ENCODE measurements at regions of chr12 and their contacts with region 1.

Region 1: GRCh38 chr12:106223485-106224354 is 24.1 kb downstream of the CKAP4 start:
- DNase-seq: peak; percentile 46 to 74 (median 69)
- H3K4me3 ChIP-seq: no peak overlapping the region
- H3K27ac ChIP-seq: no peak overlapping the region
- H3K4me1 ChIP-seq: peaks cover 0 to 5% (median 0%) of the 10 kb centered on the region in 4 experiments
- H3K27me3 ChIP-seq: peaks cover 0 to 4% (median 2%) of the 10 kb centered on the region in 5 experiments

Region 2: GRCh38 chr12:105843986-105844760 is 379.5 kb before region 1 on chr12:
- CTCF ChIA-PET with region 1: no interaction called
- POLR2A ChIA-PET with region 1: no interaction called
- DNase-seq: no peak
- H3K4me3 ChIP-seq: no peak overlapping the region
- H3K27ac ChIP-seq: no peak overlapping the region
- H3K4me1 ChIP-seq: no peaks in the 10 kb centered on the region
- H3K27me3 ChIP-seq: peaks cover 0 to 7% (median 2%) of the 10 kb centered on the region in 5 experiments

Region 3: DNA sequence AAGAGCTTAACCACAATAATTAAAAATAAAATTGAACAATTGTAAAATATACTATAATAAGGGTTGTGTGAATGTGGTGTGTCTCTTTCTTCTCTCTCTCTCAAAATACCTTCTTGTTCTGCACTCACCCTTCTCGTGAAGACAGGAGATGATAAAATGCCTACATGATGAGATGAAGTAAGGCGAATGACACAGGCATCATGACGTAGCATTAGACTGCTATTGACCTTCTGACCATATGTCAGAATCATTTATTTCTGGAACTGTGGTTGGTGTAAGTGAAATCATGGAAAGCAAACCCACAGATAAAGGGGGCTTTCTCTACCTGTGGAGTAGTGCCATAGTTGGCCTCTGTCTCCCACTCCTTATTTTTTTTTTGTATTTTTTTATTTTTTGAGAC is 47.2 kb before region 1 on chr12:
- CTCF ChIA-PET with region 1: no interaction called
- POLR2A ChIA-PET with region 1: no interaction called
- DNase-seq: no peak
- H3K4me3 ChIP-seq: no peak overlapping the region
- H3K27ac ChIP-seq: no peak overlapping the region
- H3K4me1 ChIP-seq: no peaks in the 10 kb centered on the region
- H3K27me3 ChIP-seq: peaks cover 0 to 11% (median 2%) of the 10 kb centered on the region in 5 experiments

Region 4: DNA sequence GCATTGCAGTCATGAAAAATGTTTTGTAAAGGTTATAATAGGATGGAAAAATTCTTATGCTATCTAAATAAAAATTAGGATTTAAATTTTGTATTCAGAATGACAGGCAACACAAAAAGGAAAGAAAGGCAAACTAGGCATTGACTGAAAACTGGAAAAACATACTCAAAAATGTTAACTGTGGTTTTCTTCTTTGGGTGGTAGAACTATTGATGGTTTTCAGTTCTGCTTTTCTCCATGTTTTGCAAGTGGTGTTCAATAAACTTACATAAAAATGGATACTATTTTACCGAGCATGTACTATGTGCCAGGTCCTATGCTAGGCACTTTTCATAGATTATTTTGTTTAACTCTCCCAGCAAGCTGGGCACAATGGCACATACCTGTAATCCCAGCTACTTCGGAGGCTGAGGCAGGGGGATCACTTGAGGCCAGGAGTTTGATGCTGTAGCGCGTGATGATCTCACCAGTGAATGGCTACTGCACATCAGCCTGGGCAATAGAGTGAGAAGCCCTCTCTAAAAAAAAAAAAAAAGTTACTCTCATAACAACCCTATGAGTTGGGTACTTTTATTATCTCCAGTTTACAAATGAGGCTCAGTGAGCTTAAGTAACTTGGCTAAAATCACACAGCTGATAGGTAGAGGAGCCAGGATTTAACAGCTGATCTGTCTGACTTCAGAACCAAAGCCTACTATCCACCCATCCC is 52.5 kb after region 1 on chr12:
- CTCF ChIA-PET with region 1: interaction called, 13 read pairs
- POLR2A ChIA-PET with region 1: interaction called, 3 read pairs
- DNase-seq: no peak
- H3K4me3 ChIP-seq: no peak overlapping the region
- H3K27ac ChIP-seq: no peak overlapping the region
- H3K4me1 ChIP-seq: peaks cover 0 to 3% (median 0%) of the 10 kb centered on the region in 4 experiments
- H3K27me3 ChIP-seq: no peaks in the 10 kb centered on the region

Region 5: GRCh38 chr12:106282457-106283097 is 58.9 kb after region 1 on chr12:
- CTCF ChIA-PET with region 1: interaction called, 43 read pairs
- POLR2A ChIA-PET with region 1: interaction called, 3 read pairs
- DNase-seq: peak; percentile 58 to 77 (median 73)
- H3K4me3 ChIP-seq: no peak overlapping the region
- H3K27ac ChIP-seq: no peak overlapping the region
- H3K4me1 ChIP-seq: peaks cover 0 to 7% (median 1%) of the 10 kb centered on the region in 4 experiments
- H3K27me3 ChIP-seq: peaks cover 0 to 2% (median 0%) of the 10 kb centered on the region in 5 experiments

Region 6: GRCh38 chr12:106309671-106310505 is 86.2 kb after region 1 on chr12:
- CTCF ChIA-PET with region 1: interaction called, 10 read pairs
- POLR2A ChIA-PET with region 1: interaction called, 6 read pairs
- DNase-seq: peak in 2 of 3 donors; percentile 45 to 69
- H3K4me3 ChIP-seq: no peak overlapping the region
- H3K27ac ChIP-seq: no peak overlapping the region
- H3K4me1 ChIP-seq: peaks cover 21 to 44% (median 33%) of the 10 kb centered on the region in 4 experiments
- H3K27me3 ChIP-seq: no peaks in the 10 kb centered on the region

Region 7: DNA sequence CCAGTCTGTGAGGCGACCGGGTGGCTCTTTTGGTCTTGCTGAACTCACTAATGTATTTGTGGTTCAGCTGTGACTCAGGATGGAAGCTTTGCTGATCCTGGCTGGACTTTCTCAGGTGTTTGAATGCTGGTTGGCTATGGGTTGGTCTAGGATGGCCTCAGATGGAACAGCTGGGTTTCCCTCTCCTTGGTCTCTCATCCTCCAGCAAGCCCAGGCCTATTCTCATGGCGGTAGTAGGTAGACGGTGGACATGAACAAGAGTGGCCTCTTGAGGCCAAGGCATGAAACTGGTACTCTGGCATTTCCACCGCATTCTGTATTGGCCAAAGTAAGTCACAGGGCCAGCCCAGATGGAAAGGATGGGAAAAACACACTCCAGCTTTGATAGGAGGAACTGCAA is 122.0 kb after region 1 on chr12:
- CTCF ChIA-PET with region 1: interaction called, 24 read pairs
- POLR2A ChIA-PET with region 1: no interaction called
- DNase-seq: peak; percentile 26 to 61 (median 59)
- H3K4me3 ChIP-seq: no peak overlapping the region
- H3K27ac ChIP-seq: no peak overlapping the region
- H3K4me1 ChIP-seq: no peaks in the 10 kb centered on the region
- H3K27me3 ChIP-seq: peaks cover 0 to 1% (median 0%) of the 10 kb centered on the region in 5 experiments

Region 8: DNA sequence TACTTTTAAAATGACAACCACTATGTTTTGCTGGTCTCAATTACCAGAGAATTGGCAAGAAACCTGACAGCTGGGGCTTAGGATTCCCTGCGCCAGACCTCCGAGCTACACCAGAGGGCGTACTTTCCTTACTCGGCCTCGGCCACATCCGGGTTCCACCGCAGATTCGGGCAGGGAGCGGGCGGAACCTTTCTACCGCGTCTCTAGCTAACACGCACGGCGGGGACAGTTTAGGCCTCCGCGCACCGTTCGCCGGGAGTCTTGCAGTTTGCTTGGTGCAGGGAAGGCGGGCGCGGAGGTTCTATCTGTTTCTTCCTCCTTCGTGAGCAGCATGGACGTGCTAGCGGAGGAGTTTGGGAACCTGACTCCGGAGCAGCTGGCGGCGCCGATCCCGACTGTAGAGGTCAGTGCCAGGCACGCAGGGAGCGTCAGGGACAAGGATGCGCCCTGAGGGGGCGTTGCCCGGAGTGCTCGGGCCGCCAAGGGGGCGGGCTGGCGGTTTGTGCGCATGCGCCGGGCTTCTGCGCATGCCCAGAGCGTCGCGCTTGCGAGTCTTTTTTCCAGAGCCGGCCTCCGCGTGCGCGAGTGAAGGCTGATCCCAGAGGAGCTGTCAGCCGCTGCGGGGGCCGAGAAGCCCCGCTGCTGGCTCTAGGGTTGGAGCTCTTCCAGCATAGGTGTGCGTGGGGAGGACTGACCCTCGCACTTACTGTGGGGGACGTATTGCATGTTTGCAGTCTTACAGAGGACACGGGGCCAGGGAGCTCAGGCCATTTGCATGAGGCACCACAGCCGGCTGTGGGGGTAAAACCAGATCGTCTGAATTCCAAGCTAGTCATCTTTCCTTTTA is 134.1 kb after region 1 on chr12 and contains the start of gene POLR3B:
- CTCF ChIA-PET with region 1: interaction called, 19 read pairs
- POLR2A ChIA-PET with region 1: no interaction called
- DNase-seq: peak; percentile 97 to 99 (median 99)
- H3K4me3 ChIP-seq: peak within 1 kb of the TSS; percentile 60 to 92 (median 82)
- H3K27ac ChIP-seq: peak within 1 kb of the TSS; percentile 71 to 83
- H3K4me1 ChIP-seq: peaks cover 10 to 20% (median 14%) of the 10 kb centered on the region in 4 experiments
- H3K27me3 ChIP-seq: peaks cover 0 to 4% (median 0%) of the 10 kb centered on the region in 5 experiments